Spleen (tissue), 13 donors: ENCODE measurements at regions of chr6 and their contacts with region 1.

Region 1: DNA sequence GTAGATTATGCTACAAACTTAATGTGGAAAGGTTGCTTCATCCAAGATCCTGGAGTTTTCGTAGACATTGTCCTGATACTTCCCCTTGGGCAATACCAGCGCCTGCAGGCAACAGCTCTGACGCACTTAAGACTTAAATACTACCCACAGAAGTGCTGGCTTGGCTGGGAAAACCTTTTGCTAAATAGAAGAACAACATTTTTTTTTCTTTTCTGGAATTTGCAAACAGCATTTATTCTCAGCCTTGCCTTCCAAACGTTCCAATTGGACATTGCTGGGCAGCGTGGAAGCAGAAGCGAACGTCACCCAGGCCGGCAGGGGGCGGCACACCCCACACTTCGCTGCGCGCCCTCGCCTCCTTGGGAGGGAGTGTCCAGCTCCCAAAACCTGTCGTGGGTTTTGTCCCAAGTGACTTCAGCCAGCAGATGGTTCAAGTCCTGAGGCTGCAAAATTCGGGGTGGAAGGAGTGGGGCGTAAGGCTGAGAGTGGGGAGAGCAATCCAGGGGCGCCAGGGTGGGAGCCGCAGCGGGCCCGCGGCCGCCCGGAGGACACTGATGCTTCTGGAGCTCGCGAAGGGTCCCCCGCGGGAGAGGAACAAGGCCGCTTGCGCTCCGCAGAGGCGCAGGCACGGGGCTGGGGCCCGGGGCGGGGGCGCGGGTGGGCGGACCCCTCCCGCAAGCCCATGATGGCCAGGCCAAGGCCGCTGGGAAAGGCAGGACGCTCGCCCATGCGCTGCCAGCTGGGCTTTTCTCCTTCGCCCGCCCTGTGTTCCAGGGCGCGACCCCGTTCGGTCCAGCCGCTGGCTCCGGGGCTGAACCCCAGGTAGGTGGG is 60.8 kb upstream of the MAP3K4 start:
- DNase-seq: peak; percentile 87
- H3K4me3 ChIP-seq: peak overlapping the region; percentile 12 to 69 (median 33)
- H3K27ac ChIP-seq: no peak overlapping the region
- H3K4me1 ChIP-seq: peaks cover 0 to 19% (median 13%) of the 10 kb centered on the region in 6 donors
- H3K27me3 ChIP-seq: peaks cover 0 to 46% (median 9%) of the 10 kb centered on the region in 7 donors
- CTCF ChIP-seq: peak; percentile 63 to 88 (median 80)
- POLR2A ChIP-seq: no peak

Region 2: GRCh38 chr6:160692364-160692959 is 238.3 kb before region 1 on chr6:
- intact Hi-C with region 1: no loop called
- DNase-seq: no peak
- H3K4me3 ChIP-seq: no peak overlapping the region
- H3K27ac ChIP-seq: no peak overlapping the region
- H3K4me1 ChIP-seq: no peaks in the 10 kb centered on the region
- H3K27me3 ChIP-seq: no peaks in the 10 kb centered on the region
- CTCF ChIP-seq: no peak
- POLR2A ChIP-seq: no peak

Region 3: GRCh38 chr6:161091972-161092701 is 161.4 kb after region 1 on chr6:
- intact Hi-C with region 1: loop called (anchors 10 kb)
- DNase-seq: no peak
- H3K4me3 ChIP-seq: no peak overlapping the region
- H3K27ac ChIP-seq: no peak overlapping the region
- H3K4me1 ChIP-seq: no peaks in the 10 kb centered on the region
- H3K27me3 ChIP-seq: no peaks in the 10 kb centered on the region
- CTCF ChIP-seq: no peak
- POLR2A ChIP-seq: no peak